ENCODE measurements at regions of chr11 and their contacts with region 1.

Region 1: DNA sequence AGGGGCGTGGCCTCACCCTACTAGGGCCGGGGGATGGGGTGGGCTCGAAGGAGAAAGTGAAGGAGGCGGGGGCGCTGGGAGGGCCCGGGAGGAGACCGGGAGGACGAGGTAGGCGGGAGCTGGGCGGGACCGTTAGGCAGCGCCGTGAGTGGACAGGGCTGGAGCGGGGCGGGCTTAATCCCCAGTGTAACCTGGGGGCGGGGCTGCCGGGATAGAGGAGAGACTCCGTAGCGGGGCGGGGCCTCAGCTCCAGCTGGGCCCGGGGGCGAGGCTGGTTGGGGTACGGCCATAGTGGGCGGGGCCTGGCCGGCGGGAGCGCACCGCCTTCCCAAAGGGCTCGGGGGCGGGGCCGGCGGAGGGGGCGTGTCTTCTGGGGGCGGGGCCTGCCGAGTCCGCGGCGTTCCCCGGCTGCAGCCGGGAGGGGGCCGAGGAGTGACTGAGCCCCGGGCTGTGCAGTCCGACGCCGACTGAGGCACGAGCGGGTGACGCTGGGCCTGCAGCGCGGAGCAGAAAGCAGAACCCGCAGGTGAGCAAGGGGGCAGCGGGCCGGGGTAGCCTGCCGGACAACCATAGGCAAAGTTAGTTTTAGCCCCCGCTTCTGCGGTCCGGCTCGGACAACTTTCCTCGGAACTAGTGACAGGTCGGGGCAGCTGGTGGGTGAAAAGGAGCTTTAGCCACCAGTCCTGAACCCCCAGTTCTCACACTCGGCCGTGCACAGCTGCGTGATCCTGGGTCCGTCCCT is at the start of gene CD82:
- DNase-seq: peak; percentile 100
- ATAC-seq: peak; percentile 98
- H3K4me3 ChIP-seq: peak within 1 kb of the TSS; percentile 10 to 54
- H3K27ac ChIP-seq: peak within 1 kb of the TSS; percentile 88 to 94
- H3K4me1 ChIP-seq: no peaks in the 10 kb centered on the region
- H3K27me3 ChIP-seq: no peaks in the 10 kb centered on the region
- total RNA-seq, gene CD82: 44.1 to 64.6 TPM

Region 2: GRCh38 chr11:44488165-44488965 is 77.0 kb before region 1 on chr11:
- intact Hi-C with region 1: no loop called
- DNase-seq: no peak
- ATAC-seq: no peak
- H3K4me3 ChIP-seq: no peak overlapping the region
- H3K27ac ChIP-seq: no peak overlapping the region
- H3K4me1 ChIP-seq: no peaks in the 10 kb centered on the region
- H3K27me3 ChIP-seq: no peaks in the 10 kb centered on the region

Region 3: GRCh38 chr11:44592125-44592940 is 27.0 kb after region 1 on chr11:
- intact Hi-C with region 1: loop called (anchors 1 to 2 kb)
- DNase-seq: peak; percentile 75 to 83
- ATAC-seq: peak; percentile 70
- H3K4me3 ChIP-seq: no peak overlapping the region
- H3K27ac ChIP-seq: peak overlapping the region; percentile 43 to 91
- H3K4me1 ChIP-seq: peaks cover 0 to 2% of the 10 kb centered on the region in 2 donors
- H3K27me3 ChIP-seq: no peaks in the 10 kb centered on the region

Region 4: DNA sequence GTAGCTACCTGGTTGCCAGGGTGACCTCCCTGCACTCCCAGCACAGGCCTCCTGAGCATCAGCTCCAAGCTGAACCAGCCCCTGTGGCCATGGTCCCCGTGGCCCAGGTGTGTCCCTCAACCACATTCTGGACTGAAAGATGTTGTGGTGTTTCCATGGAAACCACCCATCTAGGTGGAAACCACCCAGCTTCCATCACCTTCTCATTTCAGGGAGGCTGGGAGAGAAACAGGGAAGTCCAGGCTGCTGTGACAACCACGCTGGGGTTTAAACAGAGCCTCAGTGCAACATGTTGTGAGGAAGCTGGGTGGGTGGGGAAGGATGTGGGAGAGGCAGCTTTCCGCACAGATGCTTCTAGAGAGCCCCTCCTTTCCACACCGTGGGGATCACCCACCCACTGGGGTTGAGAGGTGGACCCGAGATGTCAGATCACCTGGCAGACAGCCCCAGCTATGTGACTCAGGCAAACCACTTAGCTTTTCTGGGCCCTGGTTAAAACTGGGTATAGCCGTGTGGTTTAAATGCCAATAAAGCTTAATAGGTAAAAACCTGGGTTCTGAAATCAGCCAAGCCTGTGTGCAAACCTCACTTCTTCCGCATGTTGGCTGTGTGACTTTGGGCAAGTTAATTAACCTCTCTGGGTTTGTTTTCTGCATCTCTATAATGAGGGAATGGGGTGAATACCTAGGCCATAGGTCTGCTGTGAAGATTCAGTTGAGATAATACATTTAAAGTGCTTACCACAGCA is 46.5 kb after region 1 on chr11:
- intact Hi-C with region 1: loop called in 1 of 2 experiments (anchors 2 kb)
- DNase-seq: peak in 1 of 2 donors; percentile 45
- ATAC-seq: no peak
- H3K4me3 ChIP-seq: no peak overlapping the region
- H3K27ac ChIP-seq: no peak overlapping the region
- H3K4me1 ChIP-seq: no peaks in the 10 kb centered on the region
- H3K27me3 ChIP-seq: no peaks in the 10 kb centered on the region

Region 5: GRCh38 chr11:44766112-44766971 is 201.0 kb after region 1 on chr11:
- intact Hi-C with region 1: loop called in 1 of 2 experiments (anchors 5 kb)
- DNase-seq: peak; percentile 84 to 87
- ATAC-seq: peak; percentile 84
- H3K4me3 ChIP-seq: no peak overlapping the region
- H3K27ac ChIP-seq: peak overlapping the region; percentile 69 to 95
- H3K4me1 ChIP-seq: peaks cover 0 to 3% of the 10 kb centered on the region in 2 donors
- H3K27me3 ChIP-seq: no peaks in the 10 kb centered on the region

Region 6: DNA sequence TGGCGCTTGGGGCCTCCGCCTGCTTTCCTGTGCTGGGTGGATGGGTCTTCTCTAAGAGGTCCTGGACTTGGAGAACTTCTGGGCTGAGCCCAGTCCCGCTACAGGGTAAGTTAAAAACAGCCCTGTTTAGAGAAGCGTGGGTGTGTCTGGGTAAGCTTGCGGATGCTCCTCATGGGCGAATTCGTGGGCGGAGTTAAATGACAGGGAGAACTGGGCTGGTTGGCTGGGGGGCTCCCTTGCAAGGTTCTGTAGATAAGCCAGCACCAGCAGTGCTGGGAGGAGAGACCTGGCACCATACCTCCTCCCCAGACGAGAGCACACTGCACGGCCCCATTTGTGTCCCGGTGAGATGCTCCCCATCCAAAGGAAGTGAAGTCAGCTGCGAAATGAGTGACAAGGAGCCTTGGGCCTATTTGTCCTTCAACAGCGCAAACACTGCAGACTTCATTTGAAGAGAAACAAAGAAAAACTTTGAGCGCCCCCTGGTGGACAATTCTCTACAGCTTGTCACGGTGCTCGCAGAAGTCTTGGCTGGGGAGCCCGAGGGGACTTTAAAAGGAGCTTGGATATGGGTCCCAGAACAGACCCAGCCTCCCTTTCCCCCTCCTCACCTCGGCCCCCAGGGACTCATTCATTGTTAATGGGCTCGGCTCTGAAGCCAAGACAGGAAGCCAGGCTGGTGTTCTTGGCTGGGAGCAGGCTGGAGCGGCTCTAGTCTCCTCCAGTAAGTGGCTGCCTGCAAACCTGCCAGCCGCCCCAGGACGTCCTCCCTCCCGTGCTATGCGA is 345.8 kb after region 1 on chr11:
- intact Hi-C with region 1: loop called (anchors 5 kb)
- DNase-seq: peak; percentile 90 to 93
- ATAC-seq: peak; percentile 89
- H3K4me3 ChIP-seq: no peak overlapping the region
- H3K27ac ChIP-seq: no peak overlapping the region
- H3K4me1 ChIP-seq: no peaks in the 10 kb centered on the region
- H3K27me3 ChIP-seq: no peaks in the 10 kb centered on the region

Region 7: DNA sequence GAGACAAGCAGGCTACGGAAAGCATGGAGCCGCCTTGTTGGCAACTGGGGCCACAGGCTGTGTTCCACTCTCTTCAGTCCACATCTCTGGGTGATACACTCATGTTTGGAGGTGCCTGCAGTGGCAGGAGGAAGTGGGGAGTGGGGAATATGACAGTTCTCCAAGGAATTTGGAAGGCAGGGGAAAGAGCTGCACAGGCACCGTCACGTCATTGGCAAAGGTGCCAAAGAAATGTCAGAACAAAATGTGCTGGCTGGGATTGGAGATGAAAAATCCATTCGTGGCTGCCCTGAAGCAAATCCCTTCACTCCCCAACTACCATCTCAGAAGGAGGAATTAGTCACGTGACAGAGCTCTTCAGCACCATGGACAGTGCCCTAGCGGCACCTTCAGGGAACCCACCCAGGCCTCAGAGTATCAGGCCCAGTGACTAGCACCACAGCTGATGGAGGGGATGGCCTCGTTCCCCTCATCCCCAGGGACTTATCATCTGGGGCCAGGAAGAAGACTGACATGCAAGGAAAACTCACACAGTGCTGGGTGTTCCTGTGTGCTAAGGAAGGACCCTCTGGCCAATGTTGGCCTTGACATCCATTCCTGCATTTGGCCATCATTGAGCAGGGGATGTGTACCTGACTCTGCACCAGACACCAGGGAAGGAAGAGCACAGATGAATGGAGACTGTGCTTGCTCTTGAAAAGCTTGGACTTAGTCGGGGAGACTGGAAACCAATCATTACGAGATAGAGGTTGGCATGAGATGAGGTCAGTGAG is 532.5 kb after region 1 on chr11:
- intact Hi-C with region 1: loop called in 1 of 2 experiments (anchors 10 kb)
- DNase-seq: peak; percentile 79 to 92
- ATAC-seq: peak; percentile 86
- H3K4me3 ChIP-seq: no peak overlapping the region
- H3K27ac ChIP-seq: no peak overlapping the region
- H3K4me1 ChIP-seq: peaks cover 0 to 2% of the 10 kb centered on the region in 2 donors
- H3K27me3 ChIP-seq: no peaks in the 10 kb centered on the region

Measured in aorta (tissue), 5 donors.